H1 (cell line): ENCODE measurements at regions of chr9 and their contacts with region 1.

Region 1: GRCh38 chr9:132973713-132974112 is 4.8 kb upstream of the GFI1B start:
- DNase-seq: no peak
- H3K4me3 ChIP-seq: no peak overlapping the region
- H3K27ac ChIP-seq: no peak overlapping the region
- H3K4me1 ChIP-seq: peaks cover 0 to 9% (median 3%) of the 10 kb centered on the region in 4 experiments; a peak in 6 of 7 replicates
- H3K27me3 ChIP-seq: peaks cover 0 to 23% (median 9%) of the 10 kb centered on the region in 4 experiments; a peak in 5 of 7 replicates
- CTCF ChIP-seq: no peak
- EP300 ChIP-seq: no peak
- POLR2A ChIP-seq: no peak
- RAD21 ChIP-seq: no peak

Region 2: DNA sequence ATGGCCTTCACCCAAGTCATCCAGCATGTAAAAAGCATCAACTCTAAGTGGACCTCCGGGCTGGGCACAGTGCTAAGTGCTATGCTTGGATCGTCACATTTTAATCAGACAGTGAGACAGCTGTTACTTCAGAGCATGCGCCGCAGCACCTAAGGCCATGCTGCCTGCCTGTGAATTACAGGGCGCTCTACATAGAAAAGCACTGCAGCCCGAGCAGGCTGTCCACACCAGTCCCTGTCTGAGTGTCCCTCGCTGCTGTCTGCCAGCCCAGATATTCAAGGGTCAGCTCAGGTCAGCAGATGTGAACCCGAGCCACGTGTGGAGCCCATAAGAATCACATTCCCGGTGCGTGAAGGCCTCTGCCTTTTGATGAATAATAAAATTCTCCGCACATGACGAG is 132.7 kb before region 1 on chr9:
- CTCF ChIA-PET with region 1: no interaction called
- POLR2A ChIA-PET with region 1: no interaction called
- DNase-seq: no peak
- H3K4me3 ChIP-seq: no peak overlapping the region
- H3K27ac ChIP-seq: no peak overlapping the region
- H3K4me1 ChIP-seq: no peaks in the 10 kb centered on the region
- H3K27me3 ChIP-seq: no peaks in the 10 kb centered on the region
- CTCF ChIP-seq: no peak
- EP300 ChIP-seq: no peak
- POLR2A ChIP-seq: no peak
- RAD21 ChIP-seq: no peak

Region 3: DNA sequence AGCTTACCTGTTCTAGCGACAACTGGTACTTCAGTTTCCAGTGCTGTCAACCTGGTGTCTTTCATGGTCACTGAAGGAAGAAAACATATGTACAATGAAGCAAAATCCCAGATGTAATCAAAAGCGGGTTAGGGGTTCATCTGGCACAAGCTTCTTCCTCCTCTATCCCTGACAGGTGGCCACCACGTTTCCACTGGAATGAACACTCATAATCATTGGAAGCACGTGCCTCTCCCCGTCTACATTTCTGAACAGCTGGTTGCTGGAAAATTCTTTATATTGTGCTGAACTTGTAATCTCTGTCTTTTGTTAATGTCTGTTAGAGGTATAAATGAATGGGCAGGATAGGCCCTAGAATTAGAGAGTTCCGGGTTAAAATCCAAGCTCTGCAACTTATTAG is 38.7 kb before region 1 on chr9:
- CTCF ChIA-PET with region 1: interaction called, 13 read pairs
- POLR2A ChIA-PET with region 1: no interaction called
- DNase-seq: no peak
- H3K4me3 ChIP-seq: no peak overlapping the region
- H3K27ac ChIP-seq: no peak overlapping the region
- H3K4me1 ChIP-seq: peaks cover 0 to 2% (median 0%) of the 10 kb centered on the region in 4 experiments; a peak in 1 of 7 replicates
- H3K27me3 ChIP-seq: no peaks in the 10 kb centered on the region
- CTCF ChIP-seq: no peak
- EP300 ChIP-seq: no peak
- POLR2A ChIP-seq: no peak
- RAD21 ChIP-seq: no peak

Region 4: GRCh38 chr9:132986640-132987620 is 13.2 kb after region 1 on chr9:
- CTCF ChIA-PET with region 1: interaction called, 11 read pairs
- POLR2A ChIA-PET with region 1: interaction called, 3 read pairs
- DNase-seq: no peak
- H3K4me3 ChIP-seq: no peak overlapping the region
- H3K27ac ChIP-seq: no peak overlapping the region
- H3K4me1 ChIP-seq: no peaks in the 10 kb centered on the region; a peak in 1 of 7 replicates
- H3K27me3 ChIP-seq: peaks cover 0 to 5% (median 1%) of the 10 kb centered on the region in 4 experiments; a peak in 2 of 7 replicates
- CTCF ChIP-seq: no peak
- EP300 ChIP-seq: no peak
- POLR2A ChIP-seq: no peak
- RAD21 ChIP-seq: no peak

Region 5: GRCh38 chr9:133210202-133210532 is 236.5 kb after region 1 on chr9:
- CTCF ChIA-PET with region 1: no interaction called
- POLR2A ChIA-PET with region 1: no interaction called
- DNase-seq: no peak
- H3K4me3 ChIP-seq: no peak overlapping the region
- H3K27ac ChIP-seq: no peak overlapping the region
- H3K4me1 ChIP-seq: no peaks in the 10 kb centered on the region
- H3K27me3 ChIP-seq: peaks cover 10 to 38% (median 33%) of the 10 kb centered on the region in 4 experiments
- CTCF ChIP-seq: no peak
- EP300 ChIP-seq: no peak
- POLR2A ChIP-seq: no peak
- RAD21 ChIP-seq: no peak